ENCODE measurements at regions of chr4 and their contacts with region 1.

Region 1: GRCh38 chr4:149247164-149247563 is 568.5 kb downstream of the IQCM start:
- DNase-seq: no peak

Region 2: GRCh38 chr4:149264093-149264733 is 17.0 kb after region 1 on chr4:
- intact Hi-C with region 1: no loop called
- DNase-seq: no peak

Region 3: GRCh38 chr4:149279776-149280175 is 32.6 kb after region 1 on chr4:
- intact Hi-C with region 1: loop called in 1 of 2 experiments (anchors 2 kb)
- DNase-seq: no peak

Region 4: DNA sequence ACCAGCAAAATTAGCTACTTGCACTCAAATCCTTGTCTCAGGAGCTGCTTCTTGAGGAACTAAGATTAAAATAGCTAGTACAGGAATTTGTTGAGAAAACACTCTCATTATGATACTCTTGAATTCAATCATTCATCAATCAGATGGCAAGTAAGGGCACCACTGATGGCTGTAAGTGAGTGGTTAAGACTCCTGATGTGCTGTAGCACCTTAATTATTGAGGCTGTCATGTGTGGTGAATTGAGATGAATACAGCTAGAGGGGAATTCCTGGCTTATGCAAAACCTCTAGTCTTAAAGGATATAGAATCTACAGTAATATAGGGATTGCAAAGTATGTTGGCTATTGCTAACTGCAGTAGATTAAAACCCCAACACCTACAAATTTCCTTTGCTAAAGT is 59.4 kb after region 1 on chr4:
- intact Hi-C with region 1: loop called in 1 of 2 experiments (anchors 2 kb)
- DNase-seq: no peak

Measured in posterior vena cava (tissue), 2 donors.